RWPE1 (cell line): ENCODE measurements at regions of chr1 and their contacts with region 1.

Region 1: GRCh38 chr1:41282679-41283317 is 40.7 kb upstream of the SCMH1 start:
- DNase-seq: peak; percentile 61
- H3K27ac ChIP-seq: no peak overlapping the region
- CTCF ChIP-seq: peak; percentile 86

Region 2: GRCh38 chr1:41360993-41361753 is 78.4 kb after region 1 on chr1 and contains the start of gene FOXO6:
- CTCF ChIA-PET with region 1: interaction called, 20 read pairs
- POLR2A ChIA-PET with region 1: no interaction called
- DNase-seq: peak; percentile 100
- H3K27ac ChIP-seq: peak within 1 kb of the TSS; percentile 96
- CTCF ChIP-seq: peak; percentile 70

Region 3: GRCh38 chr1:41416552-41417334 is 133.9 kb after region 1 on chr1:
- CTCF ChIA-PET with region 1: interaction called, 16 read pairs
- POLR2A ChIA-PET with region 1: no interaction called
- DNase-seq: peak; percentile 67
- H3K27ac ChIP-seq: peak overlapping the region; percentile 96
- CTCF ChIP-seq: peak; percentile 90

Region 4: GRCh38 chr1:41474490-41475271 is 191.9 kb after region 1 on chr1:
- CTCF ChIA-PET with region 1: interaction called, 10 read pairs
- POLR2A ChIA-PET with region 1: no interaction called
- DNase-seq: peak; percentile 42
- H3K27ac ChIP-seq: peak overlapping the region; percentile 99
- CTCF ChIP-seq: no peak